Kidney (tissue), 22 donors: ENCODE measurements at regions of chr17 and their contacts with region 1.

Region 1: GRCh38 chr17:80441133-80441578 is 26.2 kb downstream of the ENDOV start:
- DNase-seq: peak in 4 of 5 donors; percentile 87 to 89 (median 88)
- H3K4me3 ChIP-seq: no peak overlapping the region
- H3K27ac ChIP-seq: no peak overlapping the region
- H3K4me1 ChIP-seq: no peaks in the 10 kb centered on the region
- H3K27me3 ChIP-seq: no peaks in the 10 kb centered on the region
- CTCF ChIP-seq: no peak

Region 2: GRCh38 chr17:80260069-80260554 is 181.0 kb before region 1 on chr17:
- intact Hi-C with region 1: no loop called
- DNase-seq: peak; percentile 84 to 95 (median 88)
- H3K4me3 ChIP-seq: peak overlapping the region; percentile 32 to 53 (median 33)
- H3K27ac ChIP-seq: peak overlapping the region; percentile 76 to 92
- H3K4me1 ChIP-seq: peaks cover 0 to 31% (median 26%) of the 10 kb centered on the region in 3 donors
- H3K27me3 ChIP-seq: no peaks in the 10 kb centered on the region
- CTCF ChIP-seq: peak; percentile 2

Region 3: GRCh38 chr17:81210868-81211267 is 769.7 kb after region 1 on chr17:
- intact Hi-C with region 1: loop called (anchors 10 kb)
- DNase-seq: no peak
- H3K4me3 ChIP-seq: no peak overlapping the region
- H3K27ac ChIP-seq: no peak overlapping the region
- H3K4me1 ChIP-seq: no peaks in the 10 kb centered on the region
- H3K27me3 ChIP-seq: no peaks in the 10 kb centered on the region
- CTCF ChIP-seq: no peak